Caco-2 (cell line): ENCODE measurements at regions of chr14 and their contacts with region 1.

Region 1: DNA sequence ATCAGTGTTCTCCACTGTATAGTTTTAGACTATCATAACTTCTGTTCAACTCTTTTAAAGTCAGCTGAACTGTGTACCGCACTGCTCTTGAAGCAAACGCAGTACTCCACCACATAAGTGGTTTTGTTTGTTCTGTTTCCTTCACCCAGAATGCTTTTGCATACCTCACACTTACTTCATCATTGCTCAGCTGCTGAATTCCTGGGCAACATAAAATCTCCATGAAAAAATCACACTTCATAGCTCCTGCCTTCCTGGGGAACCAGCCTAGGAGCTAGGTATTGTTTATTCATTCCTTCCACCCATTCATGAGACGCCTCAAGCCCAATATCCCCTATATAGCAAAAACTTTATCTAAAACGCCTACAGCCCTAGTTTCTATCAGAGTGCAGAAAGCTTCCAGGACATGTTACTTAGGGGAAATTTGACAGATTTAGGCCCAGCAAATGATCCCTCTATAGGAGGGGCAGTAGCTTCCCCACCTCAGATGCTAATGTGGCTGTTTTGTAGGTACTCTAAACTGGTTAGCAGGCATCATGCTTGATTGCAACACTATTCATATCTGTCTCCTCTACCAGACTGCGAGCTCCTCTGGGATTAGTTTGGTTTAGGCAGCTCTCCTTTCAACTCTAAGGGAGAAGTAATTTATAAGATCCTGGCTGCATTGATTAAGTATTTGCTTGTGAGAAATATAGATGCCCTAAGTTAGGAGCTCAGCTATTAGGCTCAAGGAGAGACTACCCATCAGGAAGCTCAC is 44.5 kb downstream of the LRRC9 start:
- DNase-seq: no peak
- H3K4me3 ChIP-seq: peak overlapping the region; percentile 21; the same call in 1 of the 2 replicates
- H3K4me3 Mint-ChIP-seq: peak overlapping the region; percentile 78
- H3K27ac Mint-ChIP-seq: no peak overlapping the region
- H3K4me1 ChIP-seq: no peaks in the 10 kb centered on the region; the same call in 1 of the 2 replicates
- H3K4me1 Mint-ChIP-seq: peaks cover 7% of the 10 kb centered on the region
- H3K27me3 ChIP-seq: no peaks in the 10 kb centered on the region
- H3K27me3 Mint-ChIP-seq: no peaks in the 10 kb centered on the region
- CTCF ChIP-seq: no peak

Region 2: DNA sequence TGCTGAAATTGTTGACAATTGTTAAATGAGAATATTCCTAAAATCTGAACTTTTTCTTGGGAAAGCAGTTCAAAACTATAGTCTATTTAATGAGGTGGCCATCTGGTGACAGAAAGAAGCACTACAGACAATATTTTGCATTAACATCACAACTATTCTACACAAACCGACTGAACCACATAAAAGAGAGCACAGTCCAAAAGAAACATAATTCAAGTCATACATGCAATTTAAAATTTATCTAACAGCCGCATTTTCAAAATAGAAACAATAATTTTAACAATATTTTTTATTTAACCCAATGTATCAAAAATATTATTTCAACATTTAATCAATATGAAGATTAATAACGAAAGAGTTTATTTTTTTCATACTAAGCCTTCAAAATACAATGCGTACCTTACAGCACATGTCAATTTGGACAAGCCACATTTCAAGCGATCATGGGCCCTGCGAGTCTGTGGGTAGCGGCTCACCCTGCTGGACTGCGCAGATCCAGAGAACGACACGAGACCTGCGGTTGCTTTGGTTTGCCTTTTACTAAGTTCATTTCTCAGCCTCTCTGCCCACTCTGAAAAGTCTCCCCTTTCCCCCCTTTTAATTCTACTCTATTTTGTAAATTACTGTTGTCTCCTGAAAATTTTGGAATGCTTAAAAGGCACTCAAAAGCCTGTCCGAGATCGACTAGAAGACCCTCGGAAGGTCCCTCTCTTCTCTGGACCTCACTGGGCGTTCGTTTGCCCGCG is 45.4 kb before region 1 on chr14:
- CTCF ChIA-PET with region 1: interaction called, 5 read pairs
- POLR2A ChIA-PET with region 1: no interaction called
- intact Hi-C with region 1: loop called (anchors 2 kb)
- DNase-seq: peak; percentile 23 to 38
- H3K4me3 ChIP-seq: peak overlapping the region; percentile 45
- H3K4me3 Mint-ChIP-seq: peak overlapping the region; percentile 85
- H3K27ac Mint-ChIP-seq: peak overlapping the region; percentile 98
- H3K4me1 ChIP-seq: peaks cover 10% of the 10 kb centered on the region
- H3K4me1 Mint-ChIP-seq: peaks cover 5% of the 10 kb centered on the region
- H3K27me3 ChIP-seq: no peaks in the 10 kb centered on the region
- H3K27me3 Mint-ChIP-seq: no peaks in the 10 kb centered on the region
- CTCF ChIP-seq: peak; percentile 34 to 50

Region 3: GRCh38 chr14:60002819-60003492 is 38.5 kb after region 1 on chr14:
- CTCF ChIA-PET with region 1: interaction called, 9 read pairs
- POLR2A ChIA-PET with region 1: interaction called, 3 read pairs
- intact Hi-C with region 1: loop called (anchors 5 kb)
- DNase-seq: peak; percentile 2 to 35
- H3K4me3 ChIP-seq: no peak overlapping the region
- H3K4me3 Mint-ChIP-seq: no peak overlapping the region
- H3K27ac Mint-ChIP-seq: peak overlapping the region; percentile 12
- H3K4me1 ChIP-seq: peaks cover 21% of the 10 kb centered on the region
- H3K4me1 Mint-ChIP-seq: peaks cover 13% of the 10 kb centered on the region
- H3K27me3 ChIP-seq: no peaks in the 10 kb centered on the region
- H3K27me3 Mint-ChIP-seq: no peaks in the 10 kb centered on the region
- CTCF ChIP-seq: no peak

Region 4: DNA sequence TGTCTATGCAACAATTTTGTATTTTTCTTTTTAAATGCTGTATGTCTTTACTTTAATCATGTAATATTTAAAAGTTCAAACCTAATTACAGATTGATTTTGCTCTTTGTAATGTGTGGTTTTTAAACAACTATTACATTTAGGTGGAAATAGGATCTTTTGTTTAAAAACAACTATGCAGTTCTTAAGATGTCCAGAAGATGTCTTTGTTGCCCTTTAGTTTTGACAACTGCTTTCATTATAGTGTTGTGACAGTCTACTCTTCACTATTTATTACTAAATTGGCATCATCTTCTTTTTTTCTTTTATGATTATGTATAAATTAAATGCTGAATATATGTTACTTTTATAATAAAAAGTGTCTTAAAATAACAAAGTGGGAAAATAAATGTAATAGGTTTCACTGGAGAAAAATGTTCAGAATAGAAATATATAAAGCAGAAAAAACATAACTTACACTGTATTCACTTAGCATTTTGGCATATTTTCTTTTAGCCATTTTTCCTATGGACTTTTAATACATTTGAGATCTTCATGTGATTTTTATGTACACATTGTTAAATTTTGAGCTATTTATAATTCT is 100.2 kb after region 1 on chr14:
- CTCF ChIA-PET with region 1: no interaction called
- POLR2A ChIA-PET with region 1: no interaction called
- intact Hi-C with region 1: loop called (anchors 2 kb)
- DNase-seq: no peak
- H3K4me3 ChIP-seq: no peak overlapping the region
- H3K4me3 Mint-ChIP-seq: no peak overlapping the region
- H3K27ac Mint-ChIP-seq: no peak overlapping the region
- H3K4me1 ChIP-seq: no peaks in the 10 kb centered on the region
- H3K4me1 Mint-ChIP-seq: no peaks in the 10 kb centered on the region
- H3K27me3 ChIP-seq: no peaks in the 10 kb centered on the region
- H3K27me3 Mint-ChIP-seq: no peaks in the 10 kb centered on the region
- CTCF ChIP-seq: peak; percentile 31 to 58

Region 5: DNA sequence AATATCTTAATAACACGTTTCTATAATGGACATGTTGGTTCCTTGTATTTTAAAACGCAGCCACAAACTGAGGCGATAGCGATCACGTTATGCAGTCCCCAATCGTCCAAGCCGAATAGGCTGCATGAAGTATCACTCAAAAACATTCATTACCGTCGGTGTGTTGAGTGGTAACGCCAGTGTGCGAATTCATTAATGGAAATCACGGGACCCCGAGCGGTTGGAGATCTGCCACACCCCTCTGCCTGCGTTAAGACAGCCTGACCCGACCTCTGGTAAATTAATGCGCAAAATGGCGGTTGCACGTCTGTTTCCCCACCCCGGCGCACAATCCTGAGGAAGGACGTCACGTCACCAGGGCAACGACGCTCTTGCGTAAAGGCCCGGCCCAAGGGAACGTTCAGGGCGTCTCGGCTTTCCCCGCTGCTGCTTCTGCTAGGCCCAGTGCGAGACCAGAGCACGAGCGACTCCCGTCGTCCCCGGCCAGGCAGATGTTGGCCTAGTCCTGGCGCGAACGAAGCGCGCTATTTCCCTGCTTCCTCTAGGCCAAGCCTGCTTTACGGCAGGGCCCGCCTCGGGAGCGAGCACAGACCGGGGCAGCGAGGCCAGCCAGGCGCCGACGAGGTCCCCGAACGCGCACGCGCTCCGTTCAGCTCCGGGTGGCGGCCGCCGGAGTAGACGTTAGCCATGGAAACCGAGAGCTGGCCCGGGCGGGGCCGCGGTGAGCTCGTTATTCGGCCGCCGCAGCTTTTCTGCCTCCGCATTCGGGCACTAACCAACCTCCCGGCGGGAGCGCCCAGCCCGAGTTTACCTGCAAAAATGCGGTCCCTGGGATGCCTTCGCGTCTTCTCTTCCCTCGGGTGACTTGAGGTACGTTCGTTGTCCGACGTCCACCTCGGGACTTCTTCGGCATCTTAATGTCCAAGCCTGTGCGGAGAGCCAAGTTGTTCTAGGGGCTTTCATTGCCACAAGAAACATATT is 127.4 kb after region 1 on chr14 and contains the start of gene PCNX4:
- CTCF ChIA-PET with region 1: interaction called, 8 read pairs
- POLR2A ChIA-PET with region 1: interaction called, 4 read pairs
- intact Hi-C with region 1: loop called (anchors 1 kb)
- DNase-seq: peak; percentile 96 to 97
- H3K4me3 ChIP-seq: peak within 1 kb of the TSS; percentile 79
- H3K4me3 Mint-ChIP-seq: peak within 1 kb of the TSS; percentile 94
- H3K27ac Mint-ChIP-seq: peak within 1 kb of the TSS; percentile 80
- H3K4me1 ChIP-seq: peaks cover 22% of the 10 kb centered on the region
- H3K4me1 Mint-ChIP-seq: peaks cover 20% of the 10 kb centered on the region
- H3K27me3 ChIP-seq: no peaks in the 10 kb centered on the region
- H3K27me3 Mint-ChIP-seq: no peaks in the 10 kb centered on the region
- CTCF ChIP-seq: peak in 1 of 2 experiments; percentile 0
- total RNA-seq, gene PCNX4: 69.4 and 72.7 TPM in 2 replicates

Region 6: DNA sequence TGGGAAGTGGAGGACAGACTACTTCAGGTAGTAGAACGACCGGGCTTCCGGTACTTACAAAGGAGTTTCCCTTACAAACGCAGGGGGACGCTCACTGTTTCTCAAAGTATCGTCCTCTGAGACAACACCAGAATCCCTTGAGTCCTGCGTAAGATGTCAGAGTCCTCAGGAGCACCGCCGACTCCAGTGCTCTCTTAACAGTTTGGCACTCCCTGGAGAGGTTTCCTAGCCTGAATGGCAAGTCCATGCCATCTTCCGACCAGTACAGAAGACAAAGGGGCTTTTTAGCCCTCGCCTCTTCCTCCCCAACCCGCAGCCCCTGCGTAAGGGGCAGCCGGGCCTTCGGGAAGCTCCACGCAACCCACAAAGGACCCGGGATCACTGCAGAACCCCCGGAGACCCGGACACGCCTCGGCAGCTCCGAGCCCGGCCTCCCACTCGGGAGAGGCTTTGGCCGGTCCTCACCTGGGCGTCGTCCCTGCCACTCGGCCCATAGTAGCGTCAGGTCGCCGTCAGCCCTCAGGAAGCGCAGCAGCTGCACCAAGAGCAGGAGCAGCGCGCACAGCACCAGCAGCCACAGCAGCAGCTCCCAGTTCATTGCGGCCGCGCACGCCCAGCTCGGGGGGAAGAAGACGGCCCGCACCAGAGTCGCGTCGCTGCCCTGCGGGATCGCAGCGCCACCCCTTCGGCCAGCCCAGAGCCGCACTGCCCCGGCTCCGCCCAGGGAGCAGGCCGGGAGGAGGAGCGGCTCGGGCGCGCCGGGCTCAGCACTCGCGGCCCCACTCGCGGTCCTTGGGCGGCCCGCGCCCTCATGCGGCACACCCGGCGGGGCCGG is 200.5 kb after region 1 on chr14 and contains the start of gene DHRS7:
- CTCF ChIA-PET with region 1: interaction called, 5 read pairs
- POLR2A ChIA-PET with region 1: no interaction called
- intact Hi-C with region 1: loop called (anchors 1 kb)
- DNase-seq: peak; percentile 83 to 89
- H3K4me3 ChIP-seq: peak within 1 kb of the TSS; percentile 78
- H3K4me3 Mint-ChIP-seq: peak within 1 kb of the TSS; percentile 94
- H3K27ac Mint-ChIP-seq: peak within 1 kb of the TSS; percentile 84
- H3K4me1 ChIP-seq: no peaks in the 10 kb centered on the region
- H3K4me1 Mint-ChIP-seq: no peaks in the 10 kb centered on the region
- H3K27me3 ChIP-seq: no peaks in the 10 kb centered on the region
- H3K27me3 Mint-ChIP-seq: no peaks in the 10 kb centered on the region
- CTCF ChIP-seq: peak; percentile 15 to 26
- total RNA-seq, gene DHRS7: 61.6 and 65.6 TPM in 2 replicates